Kidney (tissue), 22 donors: ENCODE measurements at regions of chr2 and their contacts with region 1.

Region 1: GRCh38 chr2:148829618-148830017 is 45.4 kb upstream of the KIF5C start:
- DNase-seq: no peak
- H3K4me3 ChIP-seq: no peak overlapping the region
- H3K27ac ChIP-seq: no peak overlapping the region
- H3K4me1 ChIP-seq: no peaks in the 10 kb centered on the region
- H3K27me3 ChIP-seq: no peaks in the 10 kb centered on the region
- CTCF ChIP-seq: no peak

Region 2: DNA sequence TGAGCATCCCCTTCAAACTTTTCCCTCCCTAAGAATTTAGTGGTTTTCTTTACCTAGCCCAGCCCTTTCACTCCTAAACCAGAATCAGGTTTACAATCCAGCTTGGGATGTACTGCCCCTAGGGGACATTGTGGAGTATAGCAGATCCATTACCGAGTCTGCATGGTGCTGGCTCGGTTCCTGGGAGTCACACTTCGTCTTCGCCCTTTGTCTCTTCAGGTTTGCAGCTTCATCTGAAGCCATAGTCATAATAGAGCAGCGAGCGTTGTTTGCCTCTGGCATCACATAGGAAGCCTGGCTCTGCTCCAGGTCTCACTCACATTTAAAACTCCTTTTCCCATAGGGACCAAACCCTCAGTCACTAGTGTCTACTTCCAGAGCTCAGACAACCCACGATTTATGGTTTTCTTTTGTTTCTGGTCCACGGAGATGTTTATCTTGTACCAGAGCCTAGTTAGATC is 483.9 kb after region 1 on chr2:
- intact Hi-C with region 1: loop called (anchors 10 kb)
- DNase-seq: peak in 4 of 5 donors; percentile 47 to 80 (median 62)
- H3K4me3 ChIP-seq: peak overlapping the region in 1 of 3 donors; percentile 2
- H3K27ac ChIP-seq: no peak overlapping the region
- H3K4me1 ChIP-seq: peaks cover 0 to 3% (median 0%) of the 10 kb centered on the region in 3 donors
- H3K27me3 ChIP-seq: no peaks in the 10 kb centered on the region
- CTCF ChIP-seq: peak; percentile 63